AG04449 (cell line): ENCODE measurements at regions of chr10 and their contacts with region 1.

Region 1: DNA sequence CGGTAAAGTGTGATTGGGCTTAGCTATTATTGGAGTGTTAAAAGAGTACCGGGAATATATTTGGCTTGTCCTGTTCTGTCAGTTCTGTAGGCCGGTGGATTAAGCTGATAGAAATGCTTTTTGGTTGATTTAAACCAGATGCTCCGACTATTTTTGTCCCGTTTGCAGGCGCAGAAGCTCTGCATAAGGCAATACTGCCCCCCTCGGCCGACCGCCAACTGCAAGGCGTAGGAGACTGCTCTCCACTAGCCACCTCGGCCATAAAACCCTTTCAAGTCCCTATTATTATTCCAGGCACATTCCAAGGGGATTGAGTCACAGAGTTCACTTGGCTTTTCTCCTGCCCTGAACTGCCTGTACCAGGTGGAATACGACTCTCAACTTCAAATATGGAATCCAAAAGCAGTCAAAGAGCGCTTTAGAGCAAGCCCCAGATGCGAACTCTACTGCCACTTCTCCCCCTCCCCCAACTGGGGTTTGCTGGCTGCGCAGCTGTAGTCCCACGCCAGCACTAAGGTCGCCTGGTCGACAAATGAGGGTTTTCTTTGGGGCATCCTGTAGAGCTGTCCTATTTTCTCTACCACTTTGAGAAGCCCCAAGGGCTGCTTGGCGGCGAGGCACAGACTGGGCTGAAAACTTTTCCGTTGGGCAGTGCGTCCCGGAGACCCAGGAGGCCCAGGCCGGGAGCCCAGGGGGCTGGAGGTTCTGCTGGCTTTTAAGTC is 108.3 kb downstream of the REEP3 start:
- DNase-seq: peak; percentile 93
- H3K4me3 ChIP-seq: peak overlapping the region; percentile 73
- CTCF ChIP-seq: peak; percentile 82

Region 2: GRCh38 chr10:63197344-63198106 is 432.0 kb before region 1 on chr10:
- CTCF ChIA-PET with region 1: interaction called, 10 read pairs
- POLR2A ChIA-PET with region 1: interaction called, 3 read pairs
- DNase-seq: peak; percentile 70
- H3K4me3 ChIP-seq: no peak overlapping the region
- CTCF ChIP-seq: no peak

Region 3: GRCh38 chr10:63267414-63268148 is 361.9 kb before region 1 on chr10:
- CTCF ChIA-PET with region 1: interaction called, 10 read pairs
- POLR2A ChIA-PET with region 1: interaction called, 8 read pairs
- DNase-seq: peak; percentile 67
- H3K4me3 ChIP-seq: peak overlapping the region; percentile 72
- CTCF ChIP-seq: no peak

Region 4: DNA sequence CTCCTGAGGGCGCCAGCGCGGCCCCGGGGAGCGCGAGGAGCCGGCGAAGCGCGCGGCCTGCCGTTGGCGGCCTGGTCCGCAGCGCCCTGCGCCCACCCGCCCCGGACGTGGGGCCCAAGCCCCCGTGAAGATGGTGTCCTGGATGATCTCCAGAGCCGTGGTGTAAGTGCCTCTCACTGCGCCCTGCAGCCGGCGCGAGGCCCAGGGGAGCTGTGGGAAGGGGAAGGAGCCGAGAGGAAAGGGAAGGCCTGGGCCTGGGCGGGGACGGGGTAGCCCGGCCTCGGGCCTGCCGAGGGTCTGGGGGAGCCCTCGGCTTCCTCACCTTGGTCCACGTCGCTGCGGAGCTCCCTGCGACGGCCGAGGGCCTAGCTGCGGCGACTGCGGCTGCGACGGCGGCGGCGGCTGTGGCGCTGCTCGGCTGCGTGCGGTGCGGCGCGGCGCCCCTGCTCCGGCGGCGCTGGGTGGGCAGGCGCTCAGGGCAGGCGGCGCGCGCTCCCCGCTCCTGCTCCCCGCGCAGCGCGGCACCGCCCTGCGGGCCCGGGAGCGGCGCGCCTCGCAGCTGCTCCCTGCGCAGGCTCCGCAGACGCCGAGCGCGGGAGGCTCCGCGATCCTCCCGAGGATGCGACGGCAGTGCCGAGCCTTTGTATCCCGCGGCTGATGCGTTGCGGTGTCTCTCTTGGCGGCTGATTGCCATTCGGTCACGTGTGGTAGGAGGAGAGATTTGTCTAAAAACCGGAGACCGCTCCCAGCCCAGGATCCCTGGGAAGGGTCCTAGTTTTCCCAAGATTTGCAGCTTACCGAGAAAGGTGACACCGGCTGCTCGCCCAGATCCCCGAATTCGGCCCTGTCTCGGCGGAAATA is 107.9 kb before region 1 on chr10:
- CTCF ChIA-PET with region 1: interaction called, 3 read pairs
- POLR2A ChIA-PET with region 1: interaction called, 12 read pairs
- DNase-seq: no peak
- H3K4me3 ChIP-seq: peak overlapping the region; percentile 79
- CTCF ChIP-seq: no peak

Region 5: DNA sequence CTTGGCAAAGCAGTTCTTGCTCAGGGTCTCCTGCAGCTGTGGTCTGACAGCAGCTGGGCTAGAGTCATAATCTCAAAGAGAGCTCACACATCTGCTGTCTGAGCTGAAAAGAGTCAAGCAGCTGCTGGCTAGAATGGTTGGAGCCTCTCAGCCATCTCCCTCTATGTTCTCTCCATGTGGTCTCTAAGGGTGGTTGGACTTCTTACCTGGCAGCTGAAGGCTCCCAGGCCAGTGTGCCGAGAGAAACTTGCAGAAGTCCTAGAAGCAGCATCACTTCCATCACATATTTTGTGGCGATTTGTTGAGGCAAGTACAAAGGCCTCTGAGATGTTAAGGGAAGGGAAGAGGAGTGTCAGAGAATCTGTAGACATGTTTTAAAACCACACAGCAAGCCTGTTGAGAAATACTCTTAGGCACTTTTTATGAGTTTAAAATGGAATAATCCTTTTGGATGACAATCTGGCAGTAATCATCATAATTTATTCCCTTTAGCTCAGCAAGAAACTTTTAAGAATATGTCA is 15.1 kb before region 1 on chr10:
- CTCF ChIA-PET with region 1: interaction called, 15 read pairs
- POLR2A ChIA-PET with region 1: no interaction called
- DNase-seq: no peak
- H3K4me3 ChIP-seq: no peak overlapping the region
- CTCF ChIP-seq: no peak